PC-9 (cell line): ENCODE measurements at regions of chr2 and their contacts with region 1.

Region 1: DNA sequence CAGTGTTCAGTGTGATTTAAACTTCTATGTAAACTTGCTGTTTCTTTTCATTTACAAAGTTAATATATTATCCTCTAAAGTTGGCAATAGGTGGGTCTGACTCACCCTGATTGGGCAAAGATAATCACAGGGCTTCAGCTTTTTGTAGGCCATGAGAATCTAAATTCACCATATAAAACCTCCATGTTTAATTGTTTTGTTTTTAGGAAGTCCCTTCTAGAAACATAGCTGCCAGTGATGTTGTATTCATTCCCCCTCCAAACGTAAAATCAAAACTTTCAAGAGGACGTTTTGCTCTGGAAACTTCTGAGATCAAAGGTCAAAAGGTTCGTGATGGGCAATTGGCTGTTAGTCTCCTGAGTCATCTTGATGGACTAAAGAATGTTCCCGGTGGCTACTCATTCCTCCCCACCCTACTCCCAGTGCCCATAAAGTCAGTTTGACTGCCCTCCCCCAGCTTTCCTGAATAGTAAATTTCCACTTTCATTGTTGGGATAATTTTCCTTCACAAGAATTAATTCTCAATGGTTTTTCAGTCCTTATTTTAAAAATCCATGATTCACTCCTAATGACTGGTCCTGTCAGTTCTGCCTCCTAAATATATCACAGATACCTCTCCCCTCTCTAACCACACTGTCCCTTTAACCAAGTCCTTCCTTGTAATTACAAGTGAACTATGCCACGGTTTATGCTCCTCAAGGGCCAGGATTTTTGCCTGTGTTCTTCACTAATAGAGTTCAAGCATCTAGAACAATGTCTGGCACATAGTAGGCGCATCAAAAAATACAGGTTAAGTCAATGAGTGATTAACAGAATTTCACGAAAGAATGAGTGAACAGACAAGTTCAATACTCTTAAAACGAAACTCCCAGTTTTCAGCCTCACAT is 164.4 kb upstream of the VRK2 start:
- DNase-seq: peak; percentile 43 to 81
- H3K4me3 ChIP-seq: peak overlapping the region; percentile 27; the same call in 1 of the 2 replicates
- H3K27ac ChIP-seq: peak overlapping the region; percentile 79
- H3K4me1 ChIP-seq: peaks cover 40% of the 10 kb centered on the region
- H3K27me3 ChIP-seq: no peaks in the 10 kb centered on the region
- CTCF ChIP-seq: no peak

Region 2: DNA sequence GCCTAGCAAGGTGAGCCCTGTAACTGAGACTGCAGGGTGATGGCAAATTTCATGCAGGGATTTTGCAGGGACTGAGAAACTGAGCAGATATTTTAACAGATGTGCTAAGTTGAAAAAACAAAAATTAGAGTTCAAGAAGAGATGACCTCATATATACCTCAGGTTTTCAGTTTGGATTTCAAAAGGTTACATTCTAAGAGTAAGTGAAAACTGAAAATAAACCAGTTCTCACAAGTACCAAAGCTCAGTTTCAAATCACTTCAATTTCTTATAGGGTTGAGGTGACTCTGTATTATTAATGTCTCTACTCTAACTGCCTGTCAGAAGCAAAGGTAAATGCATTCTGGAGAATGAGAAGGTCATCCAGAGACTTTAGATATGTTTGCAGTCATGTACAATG is 73.0 kb before region 1 on chr2:
- CTCF ChIA-PET with region 1: no interaction called
- POLR2A ChIA-PET with region 1: interaction called, 22 read pairs
- intact Hi-C with region 1: no loop called
- DNase-seq: no peak
- H3K4me3 ChIP-seq: no peak overlapping the region
- H3K27ac ChIP-seq: no peak overlapping the region
- H3K4me1 ChIP-seq: no peaks in the 10 kb centered on the region
- H3K27me3 ChIP-seq: no peaks in the 10 kb centered on the region
- CTCF ChIP-seq: no peak

Region 3: GRCh38 chr2:57869758-57870344 is 12.4 kb before region 1 on chr2:
- CTCF ChIA-PET with region 1: no interaction called
- POLR2A ChIA-PET with region 1: no interaction called
- intact Hi-C with region 1: no loop called
- DNase-seq: peak in 1 of 2 experiments; percentile 9
- H3K4me3 ChIP-seq: no peak overlapping the region
- H3K27ac ChIP-seq: no peak overlapping the region
- H3K4me1 ChIP-seq: no peaks in the 10 kb centered on the region; the same call in 1 of the 2 replicates
- H3K27me3 ChIP-seq: no peaks in the 10 kb centered on the region
- CTCF ChIP-seq: no peak

Region 4: GRCh38 chr2:58032016-58032763 is 149.9 kb after region 1 on chr2:
- CTCF ChIA-PET with region 1: no interaction called
- POLR2A ChIA-PET with region 1: interaction called, 29 read pairs
- intact Hi-C with region 1: no loop called
- DNase-seq: no peak
- H3K4me3 ChIP-seq: no peak overlapping the region
- H3K27ac ChIP-seq: no peak overlapping the region
- H3K4me1 ChIP-seq: no peaks in the 10 kb centered on the region
- H3K27me3 ChIP-seq: no peaks in the 10 kb centered on the region
- CTCF ChIP-seq: no peak